ENCODE measurements at regions of chr3 and their contacts with region 1.

Region 1: GRCh38 chr3:15405448-15406050 is 21.8 kb downstream of the METTL6 start:
- DNase-seq: no peak
- ATAC-seq: peak; percentile 97
- H3K4me3 ChIP-seq: no peak overlapping the region
- H3K27ac ChIP-seq: no peak overlapping the region
- H3K4me1 ChIP-seq: peaks cover 5% of the 10 kb centered on the region
- H3K27me3 ChIP-seq: no peaks in the 10 kb centered on the region
- CTCF ChIP-seq: peak; percentile 44 to 75 (median 58); a peak in 5 of 6 replicates
- EP300 ChIP-seq: no peak
- POLR2A ChIP-seq: no peak
- RAD21 ChIP-seq: peak; percentile 69

Region 2: DNA sequence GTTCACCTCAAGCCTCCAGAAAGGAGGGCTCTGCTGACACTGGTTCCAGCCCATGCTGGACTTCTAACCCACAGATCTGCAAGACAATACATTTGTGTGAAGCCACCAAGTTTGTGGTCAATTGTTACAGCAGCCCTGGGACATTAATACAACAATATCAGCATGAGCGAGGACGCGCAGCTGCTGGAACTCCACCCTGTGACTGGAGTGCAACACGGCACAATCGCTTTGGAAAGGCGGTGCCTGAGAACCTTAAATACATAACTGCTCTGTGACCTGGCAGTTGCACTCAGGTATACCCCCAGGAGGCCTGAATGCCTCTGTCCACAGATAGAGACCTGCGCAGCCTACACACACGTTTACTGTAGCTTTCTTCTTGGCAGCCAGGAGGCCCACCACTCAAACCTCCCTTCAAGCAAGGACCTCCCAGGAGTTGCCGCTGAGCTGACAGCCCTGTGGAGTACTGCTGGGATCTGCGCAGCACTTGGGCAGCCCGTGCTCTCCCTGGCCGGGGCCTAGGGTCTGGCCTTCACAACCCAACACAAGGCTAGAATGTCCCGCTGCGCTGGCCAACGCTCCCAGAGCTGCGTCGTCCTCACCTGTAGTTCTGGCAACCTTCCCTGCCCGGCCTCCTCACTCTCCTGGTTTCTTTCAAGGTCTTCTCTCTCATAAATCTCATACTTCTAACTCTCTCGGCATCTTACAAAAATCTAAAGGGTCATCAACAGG is 348.7 kb before region 1 on chr3:
- CTCF ChIA-PET with region 1: no interaction called
- POLR2A ChIA-PET with region 1: no interaction called
- RAD21 ChIA-PET with region 1: no interaction called
- SMC1A ChIA-PET with region 1: no interaction called
- in situ Hi-C with region 1: no loop called
- intact Hi-C with region 1: no loop called
- DNase-seq: no peak
- ATAC-seq: no peak
- H3K4me3 ChIP-seq: no peak overlapping the region
- H3K27ac ChIP-seq: no peak overlapping the region
- H3K4me1 ChIP-seq: peaks cover 22% of the 10 kb centered on the region
- H3K27me3 ChIP-seq: no peaks in the 10 kb centered on the region
- CTCF ChIP-seq: no peak
- EP300 ChIP-seq: no peak
- POLR2A ChIP-seq: 0 out of 2 replicates have a peak, but pooled peaks have one; percentile 10
- RAD21 ChIP-seq: no peak

Region 3: GRCh38 chr3:15108082-15108545 is 297.4 kb before region 1 on chr3:
- CTCF ChIA-PET with region 1: interaction called, 22 read pairs
- POLR2A ChIA-PET with region 1: no interaction called
- RAD21 ChIA-PET with region 1: interaction called, 10 read pairs
- SMC1A ChIA-PET with region 1: interaction called, 9 read pairs
- in situ Hi-C with region 1: no loop called
- intact Hi-C with region 1: loop called (anchors 2 kb)
- DNase-seq: no peak
- ATAC-seq: peak; percentile 99
- H3K4me3 ChIP-seq: no peak overlapping the region
- H3K27ac ChIP-seq: no peak overlapping the region
- H3K4me1 ChIP-seq: no peaks in the 10 kb centered on the region
- H3K27me3 ChIP-seq: no peaks in the 10 kb centered on the region
- CTCF ChIP-seq: peak; percentile 94 to 98 (median 94)
- EP300 ChIP-seq: no peak
- POLR2A ChIP-seq: no peak
- RAD21 ChIP-seq: peak; percentile 82

Region 4: GRCh38 chr3:15205934-15206661 is 199.5 kb before region 1 on chr3 and contains the start of gene CAPN7:
- CTCF ChIA-PET with region 1: interaction called, 108 read pairs
- POLR2A ChIA-PET with region 1: interaction called, 5 read pairs
- RAD21 ChIA-PET with region 1: interaction called, 48 read pairs
- SMC1A ChIA-PET with region 1: interaction called, 135 read pairs
- in situ Hi-C with region 1: loop called (anchors 5 kb)
- intact Hi-C with region 1: loop called (anchors 1 kb)
- DNase-seq: peak; percentile 67
- ATAC-seq: peak; percentile 94
- H3K4me3 ChIP-seq: peak within 1 kb of the TSS; percentile 94
- H3K27ac ChIP-seq: peak within 1 kb of the TSS; percentile 61
- H3K4me1 ChIP-seq: no peaks in the 10 kb centered on the region
- H3K27me3 ChIP-seq: no peaks in the 10 kb centered on the region
- CTCF ChIP-seq: peak; percentile 39 to 40 (median 39); a peak in 4 of 6 replicates
- EP300 ChIP-seq: no peak
- POLR2A ChIP-seq: peak; percentile 95
- RAD21 ChIP-seq: no peak
- polyA plus RNA-seq, gene CAPN7: 5.3 to 6.7 TPM

Region 5: DNA sequence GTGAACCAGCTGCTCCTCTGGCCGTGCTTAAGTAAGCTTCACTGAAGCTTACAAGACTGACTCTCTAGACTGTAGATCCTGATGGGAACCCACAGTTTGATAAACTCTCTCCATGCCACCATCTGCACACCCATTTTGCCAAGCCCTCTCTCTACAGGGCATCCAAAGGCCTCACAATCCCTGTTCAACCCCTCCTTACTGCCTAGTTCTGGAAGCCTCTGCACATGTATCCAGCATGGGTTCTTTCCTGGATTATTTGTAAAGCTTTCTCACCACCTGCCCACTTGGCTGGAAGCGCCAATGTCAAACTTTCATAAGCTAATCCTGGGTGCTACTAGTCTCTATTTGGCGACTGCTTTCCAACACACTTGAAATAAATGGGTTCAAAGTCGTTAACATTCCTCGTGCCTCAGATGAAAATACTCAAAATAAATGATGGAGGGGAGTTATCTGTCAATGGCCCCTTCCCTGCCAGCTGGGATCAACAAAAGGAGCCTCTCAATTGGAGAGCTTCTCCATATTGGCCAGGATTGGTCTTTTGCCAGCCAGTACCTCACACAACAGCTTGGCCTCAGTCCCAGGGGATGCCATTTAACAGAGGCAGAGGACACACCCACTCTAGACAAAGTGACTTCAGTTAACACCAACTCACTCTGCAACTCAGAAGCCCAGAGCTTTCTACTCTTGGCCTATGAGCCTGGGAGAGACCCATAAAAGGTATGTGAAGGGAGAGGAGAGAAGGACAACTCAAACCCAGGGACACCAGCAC is 121.2 kb before region 1 on chr3:
- CTCF ChIA-PET with region 1: interaction called, 16 read pairs
- POLR2A ChIA-PET with region 1: no interaction called
- RAD21 ChIA-PET with region 1: interaction called, 6 read pairs
- SMC1A ChIA-PET with region 1: interaction called, 8 read pairs
- in situ Hi-C with region 1: no loop called
- intact Hi-C with region 1: no loop called
- DNase-seq: no peak
- ATAC-seq: peak; percentile 69
- H3K4me3 ChIP-seq: no peak overlapping the region
- H3K27ac ChIP-seq: no peak overlapping the region
- H3K4me1 ChIP-seq: peaks cover 25% of the 10 kb centered on the region
- H3K27me3 ChIP-seq: no peaks in the 10 kb centered on the region
- CTCF ChIP-seq: no peak
- EP300 ChIP-seq: no peak
- POLR2A ChIP-seq: no peak
- RAD21 ChIP-seq: no peak

Region 6: GRCh38 chr3:15367059-15367458 is 38.5 kb before region 1 on chr3:
- CTCF ChIA-PET with region 1: interaction called, 26 read pairs
- POLR2A ChIA-PET with region 1: no interaction called
- RAD21 ChIA-PET with region 1: interaction called, 15 read pairs
- SMC1A ChIA-PET with region 1: interaction called, 5 read pairs
- in situ Hi-C with region 1: no loop called
- intact Hi-C with region 1: no loop called
- DNase-seq: no peak
- ATAC-seq: peak; percentile 13
- H3K4me3 ChIP-seq: no peak overlapping the region
- H3K27ac ChIP-seq: no peak overlapping the region
- H3K4me1 ChIP-seq: peaks cover 24% of the 10 kb centered on the region
- H3K27me3 ChIP-seq: no peaks in the 10 kb centered on the region
- CTCF ChIP-seq: no peak
- EP300 ChIP-seq: 0 out of 4 replicates have a peak, but pooled peaks of 1 of the 2 experiments have one; percentile 33
- POLR2A ChIP-seq: no peak
- RAD21 ChIP-seq: no peak

Region 7: GRCh38 chr3:15427182-15427880 is 21.8 kb after region 1 on chr3 and contains the starts of genes EAF1 and METTL6:
- CTCF ChIA-PET with region 1: interaction called, 20 read pairs
- POLR2A ChIA-PET with region 1: no interaction called
- RAD21 ChIA-PET with region 1: interaction called, 3 read pairs
- SMC1A ChIA-PET with region 1: interaction called, 3 read pairs
- in situ Hi-C with region 1: no loop called
- intact Hi-C with region 1: no loop called
- DNase-seq: peak; percentile 38
- ATAC-seq: peak; percentile 88
- H3K4me3 ChIP-seq: peak within 1 kb of the TSS; percentile 95
- H3K27ac ChIP-seq: peak within 1 kb of the TSS; percentile 81
- H3K4me1 ChIP-seq: no peaks in the 10 kb centered on the region; the same call in 1 of the 2 replicates
- H3K27me3 ChIP-seq: no peaks in the 10 kb centered on the region
- CTCF ChIP-seq: peak in 1 of 3 experiments; percentile 15; a peak in 1 of 6 replicates
- EP300 ChIP-seq: 0 out of 4 replicates have a peak, but pooled peaks of 1 of the 2 experiments have one; percentile 10
- POLR2A ChIP-seq: peak; percentile 85
- RAD21 ChIP-seq: no peak
- polyA plus RNA-seq, gene EAF1: 6.8 to 9.2 TPM
- polyA plus RNA-seq, gene METTL6: 27.4 to 29.6 TPM